ENCODE measurements at regions of chrX and their contacts with region 1.

Region 1: DNA sequence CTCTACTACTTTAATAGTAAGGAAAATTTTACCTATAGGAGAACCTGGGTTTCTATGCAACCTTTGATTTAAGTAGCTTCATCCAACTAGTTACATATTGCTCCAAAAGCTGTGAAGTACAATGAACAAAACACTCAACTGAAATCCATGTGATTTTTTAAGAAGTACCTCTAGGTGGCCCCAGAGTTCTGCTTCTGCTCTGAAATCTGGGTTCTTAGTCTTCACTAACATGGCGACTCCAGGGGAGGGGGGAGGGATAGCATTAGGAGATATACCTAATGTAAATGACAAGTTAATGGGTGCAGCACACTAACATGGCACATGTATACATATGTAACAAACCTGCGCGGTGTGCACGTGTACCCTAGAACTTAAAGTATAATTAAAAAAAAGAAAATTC is 73.4 kb upstream of the MAGEB2 start:
- DNase-seq: no peak
- H3K4me3 ChIP-seq: no peak overlapping the region
- H3K27ac ChIP-seq: no peak overlapping the region
- H3K4me1 ChIP-seq: peaks cover 6% of the 10 kb centered on the region
- H3K27me3 ChIP-seq: no peaks in the 10 kb centered on the region
- CTCF ChIP-seq: peak; percentile 64

Region 2: DNA sequence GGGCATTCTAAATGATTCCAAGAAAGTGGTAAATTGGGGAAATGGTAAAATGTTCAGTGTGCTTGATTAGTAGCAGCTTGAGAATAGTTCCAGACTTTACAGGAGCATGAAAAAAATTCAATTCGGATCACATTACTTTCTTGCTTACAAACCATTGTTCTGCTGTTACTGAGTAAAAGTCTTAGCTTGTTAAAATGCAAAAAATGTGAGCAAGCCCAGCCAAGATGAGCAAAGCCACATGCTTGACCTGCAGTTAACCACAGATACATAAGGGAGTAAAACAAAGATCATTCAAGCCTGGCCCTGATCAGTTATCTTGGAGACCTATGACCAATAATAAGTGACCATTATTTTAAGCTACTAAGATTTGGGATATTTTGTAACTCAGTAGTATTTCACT is 489.5 kb before region 1 on chrX:
- CTCF ChIA-PET with region 1: no interaction called
- POLR2A ChIA-PET with region 1: no interaction called
- intact Hi-C with region 1: no loop called
- DNase-seq: peak in 1 of 2 experiments; percentile 9
- H3K4me3 ChIP-seq: no peak overlapping the region
- H3K27ac ChIP-seq: no peak overlapping the region
- H3K4me1 ChIP-seq: no peaks in the 10 kb centered on the region
- H3K27me3 ChIP-seq: no peaks in the 10 kb centered on the region
- CTCF ChIP-seq: no peak

Region 3: GRCh38 chrX:30189516-30189915 is 47.5 kb after region 1 on chrX:
- CTCF ChIA-PET with region 1: interaction called, 10 read pairs
- POLR2A ChIA-PET with region 1: no interaction called
- intact Hi-C with region 1: no loop called
- DNase-seq: no peak
- H3K4me3 ChIP-seq: no peak overlapping the region
- H3K27ac ChIP-seq: no peak overlapping the region
- H3K4me1 ChIP-seq: no peaks in the 10 kb centered on the region
- H3K27me3 ChIP-seq: no peaks in the 10 kb centered on the region
- CTCF ChIP-seq: no peak

Region 4: DNA sequence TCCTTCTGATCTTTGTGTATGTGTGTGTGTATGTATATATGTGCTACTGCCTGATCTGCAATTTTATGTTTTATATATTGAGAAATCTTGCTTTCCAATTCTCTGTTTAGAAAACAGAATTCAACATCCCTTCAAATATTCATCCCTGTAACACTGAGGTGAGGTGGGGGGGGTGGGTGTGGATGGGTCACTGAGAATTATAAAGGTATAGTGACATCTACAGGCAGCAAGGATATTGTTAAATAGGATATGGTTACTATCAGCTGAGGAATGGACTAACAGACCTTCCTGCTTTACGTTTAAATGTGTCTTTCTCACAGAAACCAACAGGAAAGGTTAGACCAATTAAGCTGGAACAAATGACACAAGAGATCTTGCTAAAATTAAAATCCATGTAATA is 54.4 kb after region 1 on chrX:
- CTCF ChIA-PET with region 1: no interaction called
- POLR2A ChIA-PET with region 1: no interaction called
- intact Hi-C with region 1: loop called (anchors 5 kb)
- DNase-seq: no peak
- H3K4me3 ChIP-seq: no peak overlapping the region
- H3K27ac ChIP-seq: no peak overlapping the region
- H3K4me1 ChIP-seq: no peaks in the 10 kb centered on the region
- H3K27me3 ChIP-seq: no peaks in the 10 kb centered on the region
- CTCF ChIP-seq: peak; percentile 65

Region 5: DNA sequence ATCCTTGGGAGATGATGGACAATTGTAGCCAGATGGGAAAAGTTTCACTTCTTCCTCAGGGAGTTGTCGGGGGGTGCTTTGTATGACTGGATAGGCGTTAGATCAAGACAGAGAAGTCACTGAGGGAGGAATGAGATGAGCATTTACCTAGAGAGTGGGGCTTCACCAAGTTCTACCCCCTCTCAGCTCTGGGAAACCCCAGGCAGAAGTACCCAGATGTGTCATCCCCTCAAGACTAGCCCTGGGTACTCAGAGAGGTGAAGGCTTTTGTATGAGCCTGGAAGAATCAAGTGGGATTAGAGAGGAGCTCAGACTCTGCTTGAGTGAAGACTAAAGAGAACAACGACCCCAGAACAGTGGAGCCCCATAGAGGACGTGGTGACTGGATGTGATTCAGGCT is 106.9 kb after region 1 on chrX:
- CTCF ChIA-PET with region 1: no interaction called
- POLR2A ChIA-PET with region 1: no interaction called
- intact Hi-C with region 1: no loop called
- DNase-seq: no peak
- H3K4me3 ChIP-seq: no peak overlapping the region
- H3K27ac ChIP-seq: no peak overlapping the region
- H3K4me1 ChIP-seq: no peaks in the 10 kb centered on the region
- H3K27me3 ChIP-seq: no peaks in the 10 kb centered on the region
- CTCF ChIP-seq: no peak

Region 6: GRCh38 chrX:30504309-30504708 is 362.3 kb after region 1 on chrX:
- CTCF ChIA-PET with region 1: no interaction called
- POLR2A ChIA-PET with region 1: no interaction called
- intact Hi-C with region 1: loop called (anchors 5 kb)
- DNase-seq: peak in 1 of 2 experiments; percentile 37
- H3K4me3 ChIP-seq: no peak overlapping the region
- H3K27ac ChIP-seq: no peak overlapping the region
- H3K4me1 ChIP-seq: no peaks in the 10 kb centered on the region
- H3K27me3 ChIP-seq: no peaks in the 10 kb centered on the region
- CTCF ChIP-seq: peak; percentile 70

Measured in PC-9 (cell line).